Gastrocnemius medialis (tissue), 4 donors: ENCODE measurements at regions of chr7 and their contacts with region 1.

Region 1: DNA sequence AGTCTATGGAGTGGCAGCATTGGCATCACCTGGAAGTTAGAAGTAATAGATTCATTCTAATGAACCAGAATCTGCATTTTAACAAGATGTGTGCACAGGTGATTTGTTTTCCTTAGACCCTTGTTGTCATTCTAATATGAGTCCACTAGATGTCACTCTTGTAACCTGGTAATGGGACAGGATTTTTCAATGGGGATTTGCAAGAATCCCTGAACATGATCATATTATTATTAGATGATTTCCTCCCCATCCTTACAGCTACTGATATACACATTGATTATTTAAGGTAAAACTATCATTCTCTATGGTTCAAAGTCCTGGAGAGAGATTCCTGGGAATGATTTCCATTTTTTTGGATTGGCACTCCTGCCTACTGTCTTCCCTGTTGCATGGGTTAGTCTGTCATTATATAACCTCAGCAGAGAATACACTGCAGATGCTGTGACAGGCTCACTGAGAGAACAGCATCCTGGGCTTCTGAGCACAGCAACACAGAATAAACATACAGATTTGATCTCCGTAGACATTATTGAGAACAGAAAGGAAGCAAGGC is 194.9 kb downstream of the SUGCT start:
- DNase-seq: no peak
- ATAC-seq: no peak
- H3K4me3 ChIP-seq: no peak overlapping the region
- H3K27ac ChIP-seq: no peak overlapping the region
- H3K4me1 ChIP-seq: no peaks in the 10 kb centered on the region
- H3K27me3 ChIP-seq: no peaks in the 10 kb centered on the region
- CTCF ChIP-seq: peak in 4 of 5 experiments; percentile 57 to 74 (median 64)
- POLR2A ChIP-seq: no peak

Region 2: GRCh38 chr7:40283391-40283790 is 46.3 kb before region 1 on chr7:
- in situ Hi-C with region 1: no loop called
- intact Hi-C with region 1: no loop called
- DNase-seq: no peak
- ATAC-seq: no peak
- H3K4me3 ChIP-seq: no peak overlapping the region
- H3K27ac ChIP-seq: no peak overlapping the region
- H3K4me1 ChIP-seq: no peaks in the 10 kb centered on the region
- H3K27me3 ChIP-seq: no peaks in the 10 kb centered on the region
- CTCF ChIP-seq: no peak
- POLR2A ChIP-seq: no peak

Region 3: GRCh38 chr7:40299097-40299496 is 30.6 kb before region 1 on chr7:
- in situ Hi-C with region 1: no loop called
- intact Hi-C with region 1: no loop called
- DNase-seq: no peak
- ATAC-seq: no peak
- H3K4me3 ChIP-seq: no peak overlapping the region
- H3K27ac ChIP-seq: no peak overlapping the region
- H3K4me1 ChIP-seq: no peaks in the 10 kb centered on the region
- H3K27me3 ChIP-seq: no peaks in the 10 kb centered on the region
- CTCF ChIP-seq: no peak
- POLR2A ChIP-seq: no peak

Region 4: DNA sequence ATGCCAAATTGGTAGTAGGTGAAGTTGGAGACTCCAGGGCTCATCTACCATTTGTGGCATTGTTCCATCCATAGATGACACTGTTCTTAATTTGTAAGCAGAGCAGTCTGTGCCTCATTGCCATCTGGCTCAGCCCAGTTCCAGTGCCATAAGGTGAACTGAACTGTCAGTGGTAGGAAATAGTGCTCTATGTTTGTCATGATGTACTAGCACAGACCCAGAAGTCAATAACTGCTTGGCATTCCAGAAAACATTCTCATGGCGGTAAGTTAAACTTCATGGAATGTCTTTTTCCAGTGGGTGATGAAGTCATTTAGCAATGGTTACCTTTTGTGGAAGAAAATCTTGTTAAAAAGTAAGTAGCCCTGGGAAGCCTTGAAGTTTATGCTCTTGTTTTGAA is 107.8 kb after region 1 on chr7:
- in situ Hi-C with region 1: no loop called
- intact Hi-C with region 1: no loop called
- DNase-seq: no peak
- ATAC-seq: peak; percentile 49 to 54
- H3K4me3 ChIP-seq: no peak overlapping the region
- H3K27ac ChIP-seq: no peak overlapping the region
- H3K4me1 ChIP-seq: peaks cover 11 to 20% of the 10 kb centered on the region in 2 donors
- H3K27me3 ChIP-seq: no peaks in the 10 kb centered on the region
- CTCF ChIP-seq: no peak
- POLR2A ChIP-seq: no peak

Region 5: DNA sequence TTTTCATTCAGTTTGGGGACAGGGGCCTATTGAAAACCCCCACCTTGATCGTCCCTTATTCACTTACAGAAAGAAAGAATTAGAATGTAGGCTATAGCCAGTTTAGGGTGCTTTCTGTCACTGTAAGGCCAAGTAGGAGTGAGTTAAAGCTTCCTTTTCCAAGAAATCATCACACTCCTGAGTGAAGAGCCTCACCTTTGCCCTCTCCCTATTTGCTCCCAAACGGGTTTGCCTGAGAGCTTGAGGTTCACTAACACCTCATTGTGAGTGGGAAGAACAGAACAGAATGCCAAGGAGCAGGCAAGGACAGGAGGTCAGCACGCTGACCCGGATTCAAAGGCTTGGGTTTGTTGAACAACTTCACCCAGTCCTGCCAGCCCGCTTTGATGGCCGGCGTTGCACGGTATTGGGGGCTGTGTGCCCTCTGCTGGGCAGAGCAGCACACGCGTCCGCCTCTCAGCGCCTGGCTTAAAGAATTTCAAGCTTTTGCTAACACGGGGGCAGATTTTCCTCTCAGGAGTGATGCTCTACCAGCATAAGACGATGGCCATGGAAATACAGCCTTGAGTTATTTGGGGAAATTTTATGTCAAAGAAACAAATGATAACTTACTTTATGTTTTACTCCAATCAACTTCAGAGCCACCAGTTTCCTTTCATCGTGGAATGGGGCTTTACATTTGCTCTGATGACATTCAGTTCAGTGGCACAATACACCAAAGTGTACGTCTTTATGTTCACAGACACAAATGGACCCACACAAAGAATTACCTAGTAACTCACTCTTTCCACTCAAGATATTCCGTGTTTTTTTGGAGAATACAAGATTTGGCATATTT is 275.1 kb after region 1 on chr7:
- in situ Hi-C with region 1: no loop called
- intact Hi-C with region 1: loop called (anchors 2 kb)
- DNase-seq: no peak
- ATAC-seq: no peak
- H3K4me3 ChIP-seq: no peak overlapping the region
- H3K27ac ChIP-seq: no peak overlapping the region
- H3K4me1 ChIP-seq: no peaks in the 10 kb centered on the region
- H3K27me3 ChIP-seq: no peaks in the 10 kb centered on the region
- CTCF ChIP-seq: peak in 3 of 5 experiments; percentile 31 to 42 (median 40)
- POLR2A ChIP-seq: no peak

Region 6: DNA sequence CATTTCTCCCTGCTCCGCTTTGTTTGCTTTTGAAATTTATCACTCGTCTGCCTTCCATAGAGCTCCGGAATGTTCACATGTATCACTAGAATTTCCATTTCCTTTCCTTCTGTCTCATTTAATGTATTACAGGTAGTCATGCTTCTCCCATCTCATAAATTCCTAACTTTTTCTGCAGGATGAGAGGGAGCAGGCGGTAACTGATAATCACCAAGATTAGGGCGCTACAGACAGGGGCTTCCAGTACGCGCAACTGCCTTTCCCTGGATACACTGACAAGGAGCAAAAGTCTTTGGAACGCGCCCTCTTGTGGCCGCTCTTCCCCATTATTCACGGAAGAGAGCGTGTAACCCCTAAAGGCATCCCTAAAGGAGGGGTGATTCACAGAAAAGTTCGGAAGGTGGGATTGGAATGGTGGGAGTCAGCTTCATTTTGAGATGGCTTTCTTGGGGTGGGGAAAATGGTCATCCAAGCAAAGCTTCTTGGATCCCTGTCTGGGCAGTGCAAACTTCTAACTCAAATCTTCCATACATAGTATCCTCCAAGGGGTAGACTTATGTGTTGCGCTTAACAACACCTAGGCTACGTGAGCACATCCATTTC is 1366.7 kb after region 1 on chr7:
- in situ Hi-C with region 1: loop called in 1 of 4 experiments (anchors 25 kb)
- intact Hi-C with region 1: no loop called
- DNase-seq: peak; percentile 42 to 45
- ATAC-seq: peak; percentile 50 to 62
- H3K4me3 ChIP-seq: peak overlapping the region in 3 of 4 donors; percentile 4 to 33 (median 33)
- H3K27ac ChIP-seq: peak overlapping the region; percentile 57 to 69 (median 62)
- H3K4me1 ChIP-seq: peaks cover 0 to 6% of the 10 kb centered on the region in 2 donors
- H3K27me3 ChIP-seq: peaks cover 3 to 9% (median 7%) of the 10 kb centered on the region in 3 donors
- CTCF ChIP-seq: peak; percentile 9 to 51 (median 35)
- POLR2A ChIP-seq: no peak

Region 7: DNA sequence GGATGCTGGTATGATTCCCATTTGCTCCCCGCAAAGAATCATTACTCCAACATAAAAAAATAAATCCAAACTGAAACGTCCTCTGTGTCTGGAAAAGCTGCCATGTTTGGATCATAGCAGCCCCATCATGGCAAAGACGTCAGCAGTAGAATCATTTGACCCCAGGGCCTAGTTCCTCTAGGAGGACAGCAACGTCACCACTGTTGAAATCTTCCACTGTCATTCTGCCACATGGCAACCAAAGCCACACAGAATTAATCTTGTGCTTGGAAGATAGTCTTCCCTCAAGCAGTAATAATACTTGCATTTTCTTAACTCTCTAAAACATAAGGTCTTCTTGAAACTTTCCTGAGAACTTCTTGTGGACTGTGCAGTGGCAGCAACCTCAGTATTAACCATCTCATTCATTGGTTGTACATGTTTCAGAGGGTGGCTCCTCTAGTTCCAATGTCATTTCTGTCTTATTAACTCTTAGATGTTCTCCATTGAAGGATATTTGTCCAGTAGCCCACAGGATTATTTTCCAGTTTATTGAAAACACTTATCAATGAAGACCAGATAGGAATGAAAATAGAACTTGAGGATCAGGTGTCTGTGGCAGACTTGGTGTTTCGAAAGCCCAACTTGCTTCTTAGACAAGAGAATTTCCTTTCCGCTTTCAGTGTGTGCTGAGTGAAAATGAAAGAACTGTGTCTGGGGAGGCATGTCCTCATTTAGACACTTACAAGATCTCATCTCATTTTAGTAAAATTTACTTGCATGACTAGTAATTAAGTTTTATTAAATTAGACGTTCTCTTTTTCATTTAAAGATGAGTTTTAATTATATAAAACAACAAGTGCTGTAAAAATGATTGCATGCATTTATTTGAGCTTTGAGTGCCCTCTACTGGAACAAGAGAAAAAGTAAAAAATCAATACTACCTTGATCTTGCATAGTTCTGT is 1402.1 kb after region 1 on chr7:
- in situ Hi-C with region 1: loop called in 3 of 4 experiments (anchors 25 kb)
- intact Hi-C with region 1: no loop called
- DNase-seq: no peak
- ATAC-seq: no peak
- H3K4me3 ChIP-seq: no peak overlapping the region
- H3K27ac ChIP-seq: no peak overlapping the region
- H3K4me1 ChIP-seq: no peaks in the 10 kb centered on the region
- H3K27me3 ChIP-seq: no peaks in the 10 kb centered on the region
- CTCF ChIP-seq: no peak
- POLR2A ChIP-seq: no peak